ENCODE measurements at regions of chr9 and their contacts with region 1.

Region 1: GRCh38 chr9:89428901-89429890 is 68.7 kb downstream of the SEMA4D start:
- DNase-seq: peak; percentile 77
- ATAC-seq: peak; percentile 9
- H3K4me3 Mint-ChIP-seq: no peak overlapping the region
- H3K27ac Mint-ChIP-seq: peak overlapping the region; percentile 97
- H3K4me1 Mint-ChIP-seq: peaks cover 87% of the 10 kb centered on the region
- H3K27me3 Mint-ChIP-seq: no peaks in the 10 kb centered on the region

Region 2: GRCh38 chr9:89418882-89419640 is 10.1 kb before region 1 on chr9:
- CTCF ChIA-PET with region 1: interaction called, 25 read pairs
- DNase-seq: peak; percentile 93
- ATAC-seq: peak; percentile 48
- H3K4me3 Mint-ChIP-seq: peak overlapping the region; percentile 91
- H3K27ac Mint-ChIP-seq: peak overlapping the region; percentile 97
- H3K4me1 Mint-ChIP-seq: peaks cover 98% of the 10 kb centered on the region
- H3K27me3 Mint-ChIP-seq: no peaks in the 10 kb centered on the region

Region 3: DNA sequence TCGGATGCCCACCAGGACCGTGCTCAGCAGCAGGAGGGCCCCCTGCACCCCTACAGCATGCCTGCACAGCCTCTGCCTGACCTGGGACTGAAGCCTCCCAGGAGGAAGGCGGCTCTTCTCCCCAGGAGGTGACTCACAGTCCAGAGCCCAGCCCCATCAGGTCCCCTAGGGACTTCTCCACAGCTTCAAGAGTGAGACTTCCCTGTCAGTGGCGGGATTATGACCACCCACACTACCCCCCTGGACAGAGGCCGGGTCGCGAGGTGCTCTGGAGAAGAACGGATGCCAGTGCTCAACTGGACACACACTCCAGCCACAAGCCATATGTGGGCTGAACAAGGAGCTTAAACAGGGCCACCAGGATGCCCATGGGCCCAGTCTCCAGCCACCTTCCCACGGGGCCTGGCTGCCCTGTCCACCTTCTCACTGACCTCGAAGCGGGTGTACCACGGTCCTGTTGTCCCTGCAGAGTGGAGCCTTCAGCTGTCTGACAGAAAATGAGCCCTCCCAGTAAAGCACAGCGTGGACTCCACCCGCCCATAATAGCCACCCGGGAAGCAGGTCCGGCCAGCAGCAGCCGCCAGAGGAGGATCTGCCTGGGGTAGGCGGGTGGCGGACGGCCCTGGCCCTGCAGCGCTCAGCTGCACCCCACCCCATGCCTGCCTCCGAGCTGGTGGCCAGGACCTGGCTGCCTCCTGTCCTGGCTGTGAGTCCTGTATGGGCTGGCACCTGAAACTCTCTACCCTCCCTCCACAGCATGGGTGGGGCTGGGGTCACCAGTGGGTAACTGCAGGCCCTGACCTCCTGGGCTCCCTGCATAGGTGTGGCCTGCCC is 14.0 kb after region 1 on chr9:
- CTCF ChIA-PET with region 1: interaction called, 25 read pairs
- DNase-seq: no peak
- ATAC-seq: no peak
- H3K4me3 Mint-ChIP-seq: no peak overlapping the region
- H3K27ac Mint-ChIP-seq: no peak overlapping the region
- H3K4me1 Mint-ChIP-seq: peaks cover 88% of the 10 kb centered on the region
- H3K27me3 Mint-ChIP-seq: no peaks in the 10 kb centered on the region

Region 4: GRCh38 chr9:89448381-89448780 is 19.2 kb after region 1 on chr9:
- CTCF ChIA-PET with region 1: interaction called, 25 read pairs
- DNase-seq: peak; percentile 62
- ATAC-seq: peak; percentile 42
- H3K4me3 Mint-ChIP-seq: no peak overlapping the region
- H3K27ac Mint-ChIP-seq: peak overlapping the region; percentile 83
- H3K4me1 Mint-ChIP-seq: peaks cover 88% of the 10 kb centered on the region
- H3K27me3 Mint-ChIP-seq: no peaks in the 10 kb centered on the region

Region 5: DNA sequence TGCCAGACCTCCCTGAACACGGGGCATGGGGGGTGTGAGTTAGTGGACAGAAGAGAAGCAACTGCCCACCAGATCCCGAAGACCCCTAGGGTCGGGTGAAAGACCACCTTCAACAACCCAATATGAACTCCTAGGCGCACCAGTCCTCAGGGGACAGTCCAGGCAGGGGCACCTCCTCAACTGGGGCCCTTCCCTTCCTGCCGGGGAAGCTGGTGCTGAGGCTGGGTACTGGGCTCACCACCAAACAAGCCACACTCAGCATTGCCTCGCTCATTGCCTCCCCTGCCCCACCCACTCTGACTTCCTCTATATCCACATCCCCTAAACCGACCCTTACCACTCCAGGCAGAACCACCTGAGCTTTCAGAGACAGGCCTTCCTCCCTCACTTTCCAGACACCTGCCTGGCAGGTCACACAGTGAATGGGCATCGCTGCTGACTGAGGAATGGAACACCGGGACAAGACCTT is 26.2 kb after region 1 on chr9:
- CTCF ChIA-PET with region 1: interaction called, 25 read pairs
- DNase-seq: peak; percentile 68
- ATAC-seq: peak; percentile 61
- H3K4me3 Mint-ChIP-seq: peak overlapping the region; percentile 26
- H3K27ac Mint-ChIP-seq: peak overlapping the region; percentile 87
- H3K4me1 Mint-ChIP-seq: peaks cover 87% of the 10 kb centered on the region
- H3K27me3 Mint-ChIP-seq: no peaks in the 10 kb centered on the region